K562 (cell line): ENCODE measurements at regions of chr14 and their contacts with region 1.

Region 1: DNA sequence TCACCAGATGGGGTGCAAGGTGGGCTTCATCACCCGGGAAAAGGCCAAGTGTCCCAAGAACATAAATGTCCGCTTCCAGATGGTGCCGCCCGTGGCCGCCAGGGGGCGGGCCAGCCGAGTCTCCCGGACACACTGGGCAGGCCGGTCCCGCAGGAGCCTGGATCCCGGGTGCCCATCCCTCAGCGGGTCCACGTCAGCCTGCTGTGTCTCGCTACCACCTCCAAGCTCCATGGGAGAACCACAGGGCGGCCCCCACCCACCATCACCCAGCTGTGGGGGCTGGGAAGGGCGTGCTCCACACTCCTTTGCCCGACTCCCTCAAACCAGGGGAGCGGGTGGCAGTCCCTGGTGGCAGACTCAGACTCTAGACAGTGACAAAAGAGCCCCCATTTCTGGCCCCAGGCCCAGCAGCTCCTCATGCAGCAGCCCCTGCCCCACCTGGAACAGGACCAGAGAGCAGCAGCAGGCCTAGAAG is 22.0 kb upstream of the NUDT14 start:
- DNase-seq: peak; percentile 61 to 71 (median 70)
- ATAC-seq: peak; percentile 77
- H3K4me3 ChIP-seq: no peak overlapping the region
- H3K27ac ChIP-seq: no peak overlapping the region
- H3K4me1 ChIP-seq: peaks cover 3 to 75% of the 10 kb centered on the region in 2 experiments; a peak in 3 of 5 replicates
- H3K27me3 ChIP-seq: peaks cover 0 to 5% of the 10 kb centered on the region in 2 experiments; a peak in 1 of 5 replicates
- CTCF ChIP-seq: peak; percentile 64 to 80 (median 79)
- EP300 ChIP-seq: no peak
- POLR2A ChIP-seq: no peak
- RAD21 ChIP-seq: peak; percentile 39 to 63

Region 2: DNA sequence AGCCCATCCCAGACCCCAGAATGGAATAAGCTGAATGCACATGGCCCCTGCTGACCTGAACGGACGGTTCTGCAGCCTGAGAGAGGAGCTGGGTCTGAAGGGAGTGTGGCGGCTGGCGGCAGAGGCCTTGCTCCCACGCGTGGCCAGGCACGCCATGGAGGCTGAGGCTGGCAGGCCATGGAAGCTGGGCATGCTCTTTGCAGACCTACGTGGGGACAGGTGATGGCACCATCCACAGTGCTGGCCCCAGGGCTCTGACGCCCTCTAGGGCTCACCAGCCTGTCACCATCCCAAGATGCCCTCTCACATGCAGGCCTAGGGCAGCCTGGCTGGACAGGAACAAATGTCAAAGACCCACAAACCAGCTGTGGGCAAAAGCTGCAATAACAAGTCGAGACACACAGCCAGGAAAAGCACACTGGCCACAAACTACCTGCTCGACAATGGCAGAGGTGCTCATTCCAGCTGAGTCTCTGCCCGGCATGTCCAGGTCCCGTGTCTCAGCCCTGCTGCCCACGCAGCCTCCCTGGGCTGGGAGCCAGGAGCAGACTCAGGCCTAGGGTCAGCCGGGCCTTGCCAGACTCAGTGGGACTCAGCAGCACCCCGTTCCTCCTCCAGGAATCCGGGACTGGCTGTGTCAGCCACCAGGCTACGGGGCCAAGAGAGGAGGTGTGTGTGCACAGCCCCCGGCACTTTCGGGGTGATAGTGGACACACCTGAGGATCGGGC is 64.9 kb after region 1 on chr14:
- CTCF ChIA-PET with region 1: no interaction called
- POLR2A ChIA-PET with region 1: no interaction called
- in situ Hi-C with region 1: loop called (anchors 5 kb)
- intact Hi-C with region 1: no loop called
- DNase-seq: no peak
- ATAC-seq: no peak
- H3K4me3 ChIP-seq: no peak overlapping the region
- H3K27ac ChIP-seq: no peak overlapping the region
- H3K4me1 ChIP-seq: peaks cover 0 to 5% of the 10 kb centered on the region in 2 experiments; a peak in 2 of 5 replicates
- H3K27me3 ChIP-seq: no peaks in the 10 kb centered on the region
- CTCF ChIP-seq: no peak
- EP300 ChIP-seq: no peak
- POLR2A ChIP-seq: no peak
- RAD21 ChIP-seq: no peak

Region 3: DNA sequence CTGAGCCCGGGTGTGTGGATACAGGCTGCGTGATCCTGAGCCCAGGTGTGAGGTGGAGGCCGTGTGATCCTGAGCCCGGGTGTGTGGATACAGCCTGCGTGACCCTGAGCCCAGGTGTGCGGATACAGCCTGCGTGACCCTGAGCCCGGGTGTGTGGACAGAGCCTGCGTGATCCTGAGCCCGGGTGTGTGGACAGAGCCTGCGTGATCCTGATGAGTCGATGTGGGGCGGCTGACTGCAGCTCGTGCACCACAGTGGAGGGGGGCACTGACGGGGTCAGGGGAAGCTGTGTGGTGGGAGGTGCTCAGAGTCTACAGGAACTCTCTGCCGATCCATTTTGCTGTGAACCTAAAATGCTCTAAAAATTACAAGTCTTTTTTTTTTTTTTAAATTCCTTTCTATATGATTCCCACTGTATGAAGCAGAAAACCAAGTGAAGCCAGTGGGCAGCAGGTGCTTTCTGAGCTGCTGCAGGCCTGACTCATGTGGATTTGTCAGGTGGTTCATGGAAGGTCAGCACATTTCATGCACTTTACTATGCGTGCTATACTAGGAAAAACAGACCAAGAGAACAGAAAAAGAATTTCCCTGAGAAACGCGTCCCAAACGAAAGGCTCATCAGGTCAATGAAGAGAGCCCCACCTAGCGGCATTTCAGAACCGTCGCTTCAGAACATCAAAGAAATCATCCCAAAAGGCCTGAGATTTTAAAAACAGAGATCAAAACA is 78.4 kb after region 1 on chr14:
- CTCF ChIA-PET with region 1: no interaction called
- POLR2A ChIA-PET with region 1: no interaction called
- in situ Hi-C with region 1: no loop called
- intact Hi-C with region 1: loop called (anchors 5 kb)
- DNase-seq: peak in 3 of 4 experiments; percentile 24 to 52 (median 44)
- ATAC-seq: peak; percentile 64
- H3K4me3 ChIP-seq: no peak overlapping the region
- H3K27ac ChIP-seq: no peak overlapping the region
- H3K4me1 ChIP-seq: peaks cover 0 to 9% of the 10 kb centered on the region in 2 experiments; a peak in 2 of 5 replicates
- H3K27me3 ChIP-seq: no peaks in the 10 kb centered on the region
- CTCF ChIP-seq: peak; percentile 47 to 65 (median 65)
- EP300 ChIP-seq: no peak
- POLR2A ChIP-seq: no peak
- RAD21 ChIP-seq: peak in 1 of 2 experiments; percentile 38; a peak in 1 of 4 replicates

Region 4: GRCh38 chr14:105351920-105352851 is 149.1 kb after region 1 on chr14:
- CTCF ChIA-PET with region 1: interaction called, 15 read pairs
- POLR2A ChIA-PET with region 1: no interaction called
- in situ Hi-C with region 1: no loop called
- intact Hi-C with region 1: loop called (anchors 1 kb)
- DNase-seq: peak; percentile 75 to 86 (median 80)
- ATAC-seq: peak; percentile 99
- H3K4me3 ChIP-seq: no peak overlapping the region
- H3K27ac ChIP-seq: no peak overlapping the region
- H3K4me1 ChIP-seq: peaks cover 3 to 42% of the 10 kb centered on the region in 2 experiments; a peak in 4 of 5 replicates
- H3K27me3 ChIP-seq: no peaks in the 10 kb centered on the region
- CTCF ChIP-seq: peak; percentile 82 to 90 (median 84)
- EP300 ChIP-seq: no peak
- POLR2A ChIP-seq: no peak
- RAD21 ChIP-seq: peak; percentile 69 to 90